Stomach (tissue), 19 donors: ENCODE measurements at regions of chr1 and their contacts with region 1.

Region 1: DNA sequence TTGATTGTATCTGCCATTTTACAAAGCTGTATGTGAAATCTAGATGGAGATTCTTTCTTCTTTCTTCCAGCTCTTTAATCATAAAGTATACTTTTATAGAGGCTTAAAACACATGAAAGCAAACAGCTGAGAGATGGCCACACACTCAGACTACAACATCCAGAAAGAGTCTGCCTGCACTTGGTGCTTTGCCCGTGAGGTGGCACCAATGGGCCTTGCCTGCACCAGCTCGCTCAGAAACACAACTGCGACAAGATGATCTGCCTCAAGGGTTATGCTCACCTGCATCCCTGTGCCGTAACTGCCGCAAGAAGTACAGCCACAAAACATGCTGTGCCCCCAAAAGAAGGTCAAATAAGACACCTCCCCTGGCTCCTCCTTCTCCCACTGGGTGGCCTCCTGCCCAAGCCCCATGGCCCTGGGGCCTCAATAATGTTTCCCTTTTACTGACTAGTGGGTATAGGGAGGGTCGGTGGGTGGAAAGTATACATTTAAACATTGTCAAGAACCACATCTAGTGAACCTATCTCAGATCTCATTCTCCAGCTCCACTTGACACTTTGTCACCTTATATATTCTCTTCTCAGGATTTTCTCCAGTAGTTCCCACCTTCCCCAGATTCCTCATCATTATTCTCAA is 66.7 kb upstream of the ANGPTL3 start:
- DNase-seq: peak; percentile 69 to 82
- H3K4me3 ChIP-seq: no peak overlapping the region
- H3K27ac ChIP-seq: no peak overlapping the region
- H3K4me1 ChIP-seq: no peaks in the 10 kb centered on the region
- H3K27me3 ChIP-seq: no peaks in the 10 kb centered on the region
- CTCF ChIP-seq: peak in 5 of 7 experiments; percentile 41 to 64 (median 51)
- EP300 ChIP-seq: no peak
- POLR2A ChIP-seq: no peak

Region 2: GRCh38 chr1:62318756-62319544 is 211.7 kb before region 1 on chr1 and contains the start of gene KANK4:
- intact Hi-C with region 1: no loop called
- DNase-seq: peak; percentile 28 to 76
- H3K4me3 ChIP-seq: peak within 1 kb of the TSS; percentile 51 to 67 (median 54)
- H3K27ac ChIP-seq: peak within 1 kb of the TSS in 2 of 5 donors; percentile 58
- H3K4me1 ChIP-seq: peaks cover 10 to 17% (median 14%) of the 10 kb centered on the region in 4 donors
- H3K27me3 ChIP-seq: peaks cover 0 to 42% (median 12%) of the 10 kb centered on the region in 3 donors
- CTCF ChIP-seq: no peak
- EP300 ChIP-seq: no peak
- POLR2A ChIP-seq: no peak
- total RNA-seq, gene KANK4: 2.5 to 3.9 (median 3.2) TPM in 3 of 5 donors, not detected in the others

Region 3: DNA sequence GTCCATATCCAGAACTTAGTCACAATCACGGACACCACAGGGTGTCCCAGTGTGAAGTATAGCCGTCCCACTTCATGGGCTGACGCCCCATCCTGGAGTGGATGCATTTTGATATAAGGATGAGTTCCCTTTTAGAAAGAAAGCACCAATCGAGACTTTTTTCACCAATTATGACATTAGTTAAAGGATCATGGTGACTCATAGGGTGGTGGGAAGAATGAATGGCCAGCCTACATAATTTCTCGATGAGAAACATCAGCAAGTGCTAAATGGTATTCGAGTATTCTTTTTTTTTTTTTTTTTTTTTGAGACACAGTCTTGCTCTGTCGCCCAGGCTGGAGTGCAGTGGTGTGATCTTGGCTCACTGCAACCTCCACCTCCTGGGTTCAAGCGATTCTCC is 132.3 kb before region 1 on chr1:
- intact Hi-C with region 1: no loop called
- DNase-seq: no peak
- H3K4me3 ChIP-seq: no peak overlapping the region
- H3K27ac ChIP-seq: no peak overlapping the region
- H3K4me1 ChIP-seq: no peaks in the 10 kb centered on the region
- H3K27me3 ChIP-seq: no peaks in the 10 kb centered on the region
- CTCF ChIP-seq: no peak
- EP300 ChIP-seq: no peak
- POLR2A ChIP-seq: no peak

Region 4: GRCh38 chr1:62746085-62746808 is 215.6 kb after region 1 on chr1:
- intact Hi-C with region 1: loop called (anchors 10 kb)
- DNase-seq: peak in 1 of 2 donors; percentile 76
- H3K4me3 ChIP-seq: peak overlapping the region in 2 of 4 donors; percentile 7 to 14
- H3K27ac ChIP-seq: no peak overlapping the region
- H3K4me1 ChIP-seq: peaks cover 0 to 21% (median 12%) of the 10 kb centered on the region in 4 donors
- H3K27me3 ChIP-seq: no peaks in the 10 kb centered on the region
- CTCF ChIP-seq: peak in 5 of 7 experiments; percentile 24 to 55 (median 38)
- EP300 ChIP-seq: no peak
- POLR2A ChIP-seq: no peak